ENCODE measurements at regions of chr1 and their contacts with region 1.

Region 1: DNA sequence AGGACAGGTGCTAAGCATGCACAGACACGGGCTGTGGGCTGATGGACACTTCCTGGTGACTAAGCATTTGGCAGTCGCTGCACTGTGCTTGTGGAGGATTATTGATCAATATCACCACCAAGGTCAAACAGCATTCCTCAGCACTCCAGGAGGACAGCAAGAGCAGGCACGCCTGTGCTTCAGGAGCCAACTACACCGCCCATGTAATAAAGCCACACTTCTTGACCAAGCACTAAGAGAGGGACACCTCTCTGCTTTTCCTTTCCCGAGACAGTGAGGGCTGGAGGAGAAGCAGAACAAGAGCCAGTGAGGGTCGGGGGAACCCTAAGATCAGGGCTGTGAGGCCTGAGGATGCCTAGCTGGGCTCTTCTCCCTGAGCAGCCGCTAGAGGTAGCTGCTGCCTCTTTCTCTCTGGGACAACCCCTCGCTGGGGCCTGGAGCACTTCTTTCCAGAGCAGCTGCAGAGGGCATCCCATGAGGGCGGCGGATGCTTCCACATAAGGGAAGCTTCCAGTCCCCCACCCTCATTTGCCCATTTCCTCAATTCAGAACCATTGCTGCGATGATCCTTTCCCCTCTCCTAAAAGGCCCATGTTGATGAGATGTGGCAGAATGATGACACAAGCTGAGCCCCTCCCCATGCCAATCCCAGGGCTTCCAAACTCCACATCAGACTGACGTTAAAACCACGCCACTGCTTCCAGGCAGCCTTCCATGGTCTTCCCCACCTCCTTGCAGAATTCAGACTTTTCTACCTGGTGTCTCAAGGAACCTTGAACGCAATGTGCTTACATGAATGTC is 19.1 kb downstream of the RAB7B start:
- DNase-seq: peak; percentile 82
- H3K4me3 ChIP-seq: no peak overlapping the region
- H3K27ac ChIP-seq: no peak overlapping the region
- H3K4me1 ChIP-seq: no peaks in the 10 kb centered on the region
- H3K27me3 ChIP-seq: no peaks in the 10 kb centered on the region

Region 2: DNA sequence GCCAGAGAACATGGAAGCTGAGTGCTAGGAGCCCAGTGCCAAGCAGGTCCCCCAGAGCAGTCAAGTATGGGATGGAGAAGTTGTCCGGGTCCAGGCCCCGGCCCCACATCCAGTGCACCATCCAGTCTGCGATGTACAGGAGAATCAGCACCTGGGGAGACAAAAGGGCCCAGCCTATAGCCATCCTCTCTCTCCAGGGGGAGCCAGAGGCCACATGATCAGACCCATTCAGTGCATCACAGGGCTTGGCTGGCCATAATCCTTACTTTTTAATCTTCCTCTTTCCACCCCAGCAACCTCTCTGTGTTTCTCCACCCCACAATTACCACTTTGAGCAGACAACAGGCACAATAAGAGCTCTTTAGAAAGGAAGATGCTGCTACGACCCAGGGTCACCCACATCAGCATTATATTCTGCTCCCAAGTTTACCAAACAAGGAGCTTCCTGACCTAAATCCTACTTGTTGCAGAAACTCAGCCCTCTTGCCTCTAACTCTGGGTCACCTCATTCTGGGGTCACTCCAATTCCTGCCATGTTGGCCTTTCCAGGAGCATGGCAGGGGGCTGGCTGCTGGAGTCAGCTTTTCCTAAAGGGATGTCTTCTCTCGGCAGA is 192.5 kb before region 1 on chr1:
- in situ Hi-C with region 1: loop called (anchors 10 kb)
- DNase-seq: peak; percentile 75
- H3K4me3 ChIP-seq: no peak overlapping the region
- H3K27ac ChIP-seq: no peak overlapping the region
- H3K4me1 ChIP-seq: no peaks in the 10 kb centered on the region
- H3K27me3 ChIP-seq: no peaks in the 10 kb centered on the region

Region 3: DNA sequence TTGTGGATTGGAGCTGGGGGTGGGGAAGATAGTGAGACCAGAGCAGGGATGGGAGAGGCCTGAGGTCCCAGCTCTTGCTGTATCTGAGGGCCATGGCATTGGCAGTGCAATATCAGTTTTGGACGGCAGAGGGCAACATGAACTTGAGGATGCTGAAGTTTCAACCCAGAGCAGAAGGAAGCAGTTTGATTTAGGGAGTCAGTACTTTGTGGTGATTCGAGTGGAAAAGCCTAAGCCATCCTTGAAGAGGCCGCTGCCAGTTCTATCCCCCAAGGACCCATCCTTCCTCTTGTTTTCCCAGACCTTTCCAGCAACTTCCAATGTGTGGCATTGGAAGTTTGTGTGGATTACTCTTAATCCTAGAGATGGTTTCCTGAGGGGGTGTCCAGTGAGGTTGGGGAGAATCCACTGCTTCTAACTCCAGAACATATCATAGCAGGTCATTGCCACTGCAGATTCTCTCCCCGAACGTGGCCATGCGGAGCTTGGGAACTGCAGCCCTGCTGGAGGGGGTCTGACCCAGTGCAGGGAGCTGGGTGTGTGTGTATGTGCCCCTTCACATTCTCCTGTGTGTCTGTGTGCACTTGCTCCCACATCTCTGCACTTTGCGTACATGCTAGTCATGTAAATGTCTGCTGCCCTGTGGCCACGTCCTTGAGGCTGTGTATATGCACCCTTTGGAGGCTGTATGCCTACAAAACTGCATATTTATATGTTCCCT is 64.9 kb before region 1 on chr1:
- in situ Hi-C with region 1: no loop called
- DNase-seq: peak; percentile 78
- H3K4me3 ChIP-seq: no peak overlapping the region
- H3K27ac ChIP-seq: no peak overlapping the region
- H3K4me1 ChIP-seq: no peaks in the 10 kb centered on the region
- H3K27me3 ChIP-seq: no peaks in the 10 kb centered on the region

Region 4: DNA sequence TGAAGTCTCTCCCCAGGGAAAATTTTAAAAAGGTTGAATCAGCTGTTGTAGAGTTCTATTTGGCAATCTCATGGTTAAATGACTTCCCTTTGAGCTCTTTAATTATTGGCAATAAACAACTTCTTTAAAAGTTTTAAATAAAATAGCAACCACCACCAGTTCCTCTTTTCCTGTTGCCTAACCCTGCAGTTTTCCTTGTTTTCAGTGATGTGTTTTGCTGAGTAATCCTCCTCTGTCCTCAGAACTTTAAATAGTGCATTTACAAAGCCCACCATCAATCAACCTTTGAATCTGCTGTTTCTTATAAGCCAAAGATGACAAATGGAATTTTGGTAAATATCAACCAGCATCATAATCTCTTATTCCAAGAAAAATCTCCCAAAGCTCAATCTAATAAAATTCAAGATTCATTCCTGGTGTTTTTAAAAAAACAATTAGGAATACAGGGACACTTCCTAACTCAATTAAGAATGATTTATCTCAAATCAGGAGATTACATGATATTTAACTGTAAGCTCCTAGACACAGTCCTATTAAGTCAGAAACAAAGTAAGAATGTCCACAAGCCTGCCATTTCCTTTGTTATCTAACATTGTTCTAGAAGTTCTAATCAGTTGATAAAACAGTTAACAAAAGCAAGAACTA is 118.3 kb after region 1 on chr1:
- in situ Hi-C with region 1: loop called (anchors 5 kb)
- DNase-seq: no peak
- H3K4me3 ChIP-seq: no peak overlapping the region
- H3K27ac ChIP-seq: no peak overlapping the region
- H3K4me1 ChIP-seq: peaks cover 6% of the 10 kb centered on the region; the same call in 1 of the 2 replicates
- H3K27me3 ChIP-seq: peaks cover 38% of the 10 kb centered on the region

Measured in GM23248 (cell line).